ENCODE measurements at regions of chr19 and their contacts with region 1.

Region 1: GRCh38 chr19:38387550-38388348 is at the start of gene GGN:
- DNase-seq: peak; percentile 98 to 100
- ATAC-seq: peak; percentile 53 to 78
- H3K4me3 ChIP-seq: peak within 1 kb of the TSS; percentile 61
- H3K27ac ChIP-seq: peak within 1 kb of the TSS; percentile 71 to 90
- H3K4me1 ChIP-seq: peaks cover 35% of the 10 kb centered on the region
- CTCF ChIP-seq: no peak
- EP300 ChIP-seq: no peak
- POLR2A ChIP-seq: no peak; the same call in 1 of the 2 replicates
- RAD21 ChIP-seq: no peak
- polyA plus RNA-seq, gene GGN: not detected in 2 replicates

Region 2: GRCh38 chr19:38239816-38240215 is 147.9 kb before region 1 on chr19:
- CTCF ChIA-PET with region 1: interaction called, 63 read pairs
- POLR2A ChIA-PET with region 1: interaction called, 6 read pairs
- DNase-seq: no peak
- ATAC-seq: no peak
- H3K4me3 ChIP-seq: no peak overlapping the region
- H3K27ac ChIP-seq: no peak overlapping the region
- H3K4me1 ChIP-seq: no peaks in the 10 kb centered on the region
- CTCF ChIP-seq: no peak
- EP300 ChIP-seq: no peak
- POLR2A ChIP-seq: no peak
- RAD21 ChIP-seq: no peak

Region 3: DNA sequence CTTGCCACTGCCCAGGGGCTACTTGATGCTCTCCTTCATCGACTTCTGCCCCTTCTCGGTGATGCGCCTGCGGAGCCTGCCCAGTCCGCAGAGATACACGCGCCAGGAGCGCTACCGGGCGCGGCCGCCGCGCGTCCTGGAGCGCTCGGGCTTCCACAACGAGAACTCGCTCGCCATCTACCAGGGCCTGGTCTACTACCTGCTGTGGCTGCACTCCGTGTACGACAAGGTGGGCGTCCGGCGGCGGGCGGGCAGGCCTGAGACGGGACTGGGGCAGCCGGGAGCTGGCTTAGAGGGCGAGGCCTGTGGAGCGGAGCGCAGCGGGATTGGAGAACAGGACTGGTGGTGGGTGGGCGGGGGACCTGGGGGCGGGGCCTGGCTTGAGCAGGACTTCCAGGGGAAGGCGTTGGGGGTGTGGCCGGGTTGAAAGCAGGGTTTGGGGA is 26.1 kb before region 1 on chr19:
- CTCF ChIA-PET with region 1: interaction called, 6 read pairs
- POLR2A ChIA-PET with region 1: interaction called, 10 read pairs
- DNase-seq: peak; percentile 96 to 99
- ATAC-seq: peak; percentile 81 to 93
- H3K4me3 ChIP-seq: peak overlapping the region; percentile 65
- H3K27ac ChIP-seq: peak overlapping the region; percentile 62 to 81
- H3K4me1 ChIP-seq: peaks cover 9% of the 10 kb centered on the region; the same call in 1 of the 3 replicates
- CTCF ChIP-seq: no peak
- EP300 ChIP-seq: no peak
- POLR2A ChIP-seq: no peak
- RAD21 ChIP-seq: no peak

Region 4: DNA sequence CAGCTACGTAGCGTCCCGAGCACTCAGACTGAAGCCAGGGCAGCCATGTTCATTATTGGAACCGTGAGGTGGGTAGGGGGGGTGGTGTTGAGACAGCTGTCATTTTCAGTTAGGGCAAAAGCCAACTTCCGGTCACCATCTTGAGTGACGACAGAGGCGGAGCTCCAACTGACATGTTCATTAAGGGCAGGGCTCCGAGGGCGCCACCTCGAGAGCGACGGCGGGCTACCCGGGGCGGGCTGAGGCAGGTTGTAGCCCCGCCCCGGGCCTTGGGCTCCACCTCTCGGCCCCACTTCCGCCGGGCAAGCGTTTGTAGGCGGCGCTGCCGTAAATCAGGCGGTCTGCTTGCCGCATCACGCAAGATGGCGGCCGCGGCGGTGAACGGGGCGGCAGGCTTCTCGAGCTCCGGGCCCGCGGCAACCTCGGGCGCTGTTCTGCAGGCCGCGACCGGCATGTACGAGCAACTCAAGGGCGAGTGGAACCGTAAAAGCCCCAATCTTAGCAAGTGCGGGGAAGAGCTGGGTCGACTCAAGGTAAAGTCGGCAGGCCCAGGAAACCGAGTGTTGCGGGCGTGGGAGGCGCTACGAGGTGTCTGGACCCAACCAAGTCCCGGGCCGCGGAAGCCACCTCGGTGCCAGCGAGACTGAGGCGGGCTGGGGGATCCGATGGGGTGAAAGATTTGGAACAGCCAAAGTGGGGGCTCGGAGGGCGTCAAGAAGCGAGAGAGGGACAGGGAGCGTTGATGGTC is 13.1 kb before region 1 on chr19 and contains the start of gene PSMD8:
- CTCF ChIA-PET with region 1: interaction called, 59 read pairs
- POLR2A ChIA-PET with region 1: interaction called, 89 read pairs
- DNase-seq: peak; percentile 100
- ATAC-seq: peak; percentile 91 to 97
- H3K4me3 ChIP-seq: peak within 1 kb of the TSS; percentile 78
- H3K27ac ChIP-seq: peak within 1 kb of the TSS; percentile 88 to 91
- H3K4me1 ChIP-seq: peaks cover 17% of the 10 kb centered on the region
- CTCF ChIP-seq: peak; percentile 40
- EP300 ChIP-seq: no peak
- POLR2A ChIP-seq: peak; percentile 100
- RAD21 ChIP-seq: peak in 1 of 2 experiments; percentile 35; a peak in 3 of 5 replicates
- polyA plus RNA-seq, gene PSMD8: 437 and 469 TPM in 2 replicates